GM10248 (cell line): ENCODE measurements at regions of chr7 and their contacts with region 1.

Region 1: DNA sequence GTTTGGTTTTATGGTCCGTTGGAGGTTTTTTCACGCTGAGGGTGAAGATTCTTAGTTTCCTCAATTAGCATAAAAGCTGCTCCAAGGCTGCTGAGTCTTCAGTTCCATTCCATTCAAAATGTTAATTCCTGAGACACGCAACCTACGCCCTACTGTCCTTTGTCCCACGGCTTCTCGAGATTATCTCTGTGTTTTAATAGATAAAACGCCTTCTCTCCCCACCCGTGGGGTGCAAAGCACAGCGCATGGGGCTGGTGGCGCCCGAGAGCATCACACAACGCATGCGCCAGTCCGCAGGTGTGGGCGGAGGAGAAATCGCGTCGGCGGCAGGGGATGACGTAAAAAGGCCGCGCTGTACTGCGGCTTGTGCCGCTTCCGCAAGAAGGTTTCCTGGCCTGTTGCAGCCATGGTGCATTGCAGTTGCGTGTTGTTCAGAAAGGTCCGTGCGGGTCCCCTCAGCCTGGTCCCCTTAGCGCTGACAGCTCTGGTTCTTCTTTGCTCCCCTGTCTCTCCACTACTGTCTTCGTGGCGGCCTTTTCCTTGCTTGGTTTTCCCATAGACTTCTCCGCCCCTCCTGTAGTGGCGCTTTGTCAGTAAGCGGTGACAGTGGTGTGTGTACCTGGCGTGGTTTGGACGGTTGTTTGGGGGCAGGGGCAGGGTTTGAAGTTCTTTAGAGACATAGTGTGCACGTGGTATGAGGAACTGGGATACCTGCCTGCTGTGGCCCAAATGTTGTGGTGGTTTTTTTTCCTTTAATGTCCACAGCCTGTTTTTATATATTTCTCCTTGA is at the start of gene GTPBP10:
- DNase-seq: peak; percentile 93
- CTCF ChIP-seq: peak; percentile 85

Region 2: DNA sequence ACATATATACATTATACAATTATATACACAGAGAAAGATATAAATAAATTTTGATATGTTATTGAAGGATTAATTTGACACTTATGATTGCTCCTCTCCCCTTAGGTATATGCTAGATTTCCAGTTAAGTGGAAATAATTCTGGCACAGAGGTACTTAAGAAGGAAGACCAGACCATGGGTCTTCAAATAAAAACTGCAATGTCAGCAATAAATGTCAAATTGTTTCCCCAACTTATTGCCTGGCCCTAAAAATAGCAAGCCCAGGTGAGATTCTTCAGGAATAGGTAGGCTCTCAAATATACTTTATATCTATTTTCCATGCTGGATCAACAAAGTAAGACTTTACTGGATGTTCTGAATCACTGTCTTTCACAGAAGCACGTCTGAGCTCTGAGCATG is 743.5 kb before region 1 on chr7:
- CTCF ChIA-PET with region 1: no interaction called
- POLR2A ChIA-PET with region 1: no interaction called
- DNase-seq: no peak
- CTCF ChIP-seq: no peak

Region 3: GRCh38 chr7:90334193-90334843 is 12.2 kb before region 1 on chr7:
- CTCF ChIA-PET with region 1: interaction called, 11 read pairs
- POLR2A ChIA-PET with region 1: no interaction called
- DNase-seq: no peak
- CTCF ChIP-seq: no peak

Region 4: DNA sequence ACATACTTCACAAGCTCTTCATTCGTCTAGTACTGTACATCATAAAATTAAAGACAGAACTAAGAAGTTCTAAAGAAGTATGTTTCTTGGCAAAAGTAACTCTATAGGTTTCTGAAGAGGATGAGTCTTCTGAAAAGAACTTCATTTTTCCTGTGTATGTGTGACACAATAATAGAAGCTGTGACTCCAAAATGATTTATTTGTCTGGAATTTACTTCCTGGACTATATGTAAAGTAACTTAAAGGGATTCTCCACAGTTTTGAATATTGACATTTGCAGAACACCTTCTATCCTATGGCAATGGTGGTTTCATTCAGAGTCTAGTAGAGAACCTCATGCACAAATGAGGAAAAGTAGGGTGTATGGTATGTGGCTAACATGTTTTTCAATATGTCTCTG is 36.9 kb after region 1 on chr7:
- CTCF ChIA-PET with region 1: no interaction called
- POLR2A ChIA-PET with region 1: no interaction called
- DNase-seq: no peak
- CTCF ChIP-seq: no peak